ENCODE measurements at regions of chr2 and their contacts with region 1.

Region 1: DNA sequence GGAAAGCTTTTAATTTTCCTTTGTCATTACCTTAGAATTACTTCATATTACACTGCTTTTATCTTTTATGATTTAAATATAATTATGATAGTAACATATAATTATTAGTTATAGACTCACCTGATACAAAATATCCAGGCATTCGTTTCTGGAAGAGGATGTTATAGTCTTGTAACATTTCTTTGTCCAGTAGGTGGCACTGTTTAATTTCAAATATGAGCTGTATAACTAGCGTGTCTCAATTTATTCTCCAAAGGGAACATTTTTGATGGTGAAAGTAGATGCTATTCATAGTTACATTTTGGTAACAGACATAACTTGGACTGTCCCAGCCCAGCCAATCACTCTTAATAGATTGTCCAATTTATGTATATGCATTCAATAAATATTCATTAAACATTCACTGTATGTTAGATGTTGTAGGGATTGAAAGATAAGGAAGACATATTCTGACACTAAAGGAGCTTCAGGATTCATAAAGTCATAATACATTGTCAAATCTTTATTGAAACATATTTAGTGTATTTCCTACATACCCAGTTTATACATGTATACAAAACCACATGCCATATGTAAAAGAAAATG is 19.2 kb downstream of the DAW1 start:
- DNase-seq: no peak
- ATAC-seq: no peak
- H3K4me3 Mint-ChIP-seq: no peak overlapping the region
- H3K27ac Mint-ChIP-seq: no peak overlapping the region
- H3K4me1 Mint-ChIP-seq: no peaks in the 10 kb centered on the region
- H3K27me3 Mint-ChIP-seq: peaks cover 9% of the 10 kb centered on the region

Region 2: DNA sequence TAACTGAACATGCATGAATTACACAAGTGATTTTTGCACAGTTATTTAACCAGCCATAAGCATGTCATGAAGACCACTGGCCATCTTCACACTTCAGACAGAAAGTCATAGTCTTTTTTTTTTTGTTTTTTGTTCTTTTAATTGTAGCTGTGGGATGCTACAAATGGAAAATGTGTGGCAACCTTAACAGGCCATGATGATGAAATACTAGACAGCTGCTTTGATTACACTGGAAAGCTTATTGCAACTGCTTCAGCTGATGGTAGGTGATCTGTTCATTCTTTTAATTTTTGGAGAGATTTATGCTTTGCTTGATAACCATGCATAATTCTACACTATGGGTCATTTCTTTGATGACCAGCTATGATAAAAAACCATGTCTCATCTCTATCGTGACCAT is 16.4 kb after region 1 on chr2:
- CTCF ChIA-PET with region 1: interaction called, 27 read pairs
- POLR2A ChIA-PET with region 1: no interaction called
- intact Hi-C with region 1: no loop called
- DNase-seq: no peak
- ATAC-seq: no peak
- H3K4me3 Mint-ChIP-seq: no peak overlapping the region
- H3K27ac Mint-ChIP-seq: no peak overlapping the region
- H3K4me1 Mint-ChIP-seq: no peaks in the 10 kb centered on the region
- H3K27me3 Mint-ChIP-seq: peaks cover 2% of the 10 kb centered on the region

Region 3: GRCh38 chr2:227971619-227972230 is 81.1 kb after region 1 on chr2:
- CTCF ChIA-PET with region 1: no interaction called
- POLR2A ChIA-PET with region 1: no interaction called
- intact Hi-C with region 1: no loop called
- DNase-seq: no peak
- ATAC-seq: no peak
- H3K4me3 Mint-ChIP-seq: no peak overlapping the region
- H3K27ac Mint-ChIP-seq: no peak overlapping the region
- H3K4me1 Mint-ChIP-seq: no peaks in the 10 kb centered on the region
- H3K27me3 Mint-ChIP-seq: no peaks in the 10 kb centered on the region

Region 4: GRCh38 chr2:228681426-228681825 is 790.8 kb after region 1 on chr2:
- CTCF ChIA-PET with region 1: no interaction called
- POLR2A ChIA-PET with region 1: interaction called, 10 read pairs
- intact Hi-C with region 1: no loop called
- DNase-seq: no peak
- ATAC-seq: no peak
- H3K4me3 Mint-ChIP-seq: no peak overlapping the region
- H3K27ac Mint-ChIP-seq: no peak overlapping the region
- H3K4me1 Mint-ChIP-seq: no peaks in the 10 kb centered on the region
- H3K27me3 Mint-ChIP-seq: no peaks in the 10 kb centered on the region

Region 5: DNA sequence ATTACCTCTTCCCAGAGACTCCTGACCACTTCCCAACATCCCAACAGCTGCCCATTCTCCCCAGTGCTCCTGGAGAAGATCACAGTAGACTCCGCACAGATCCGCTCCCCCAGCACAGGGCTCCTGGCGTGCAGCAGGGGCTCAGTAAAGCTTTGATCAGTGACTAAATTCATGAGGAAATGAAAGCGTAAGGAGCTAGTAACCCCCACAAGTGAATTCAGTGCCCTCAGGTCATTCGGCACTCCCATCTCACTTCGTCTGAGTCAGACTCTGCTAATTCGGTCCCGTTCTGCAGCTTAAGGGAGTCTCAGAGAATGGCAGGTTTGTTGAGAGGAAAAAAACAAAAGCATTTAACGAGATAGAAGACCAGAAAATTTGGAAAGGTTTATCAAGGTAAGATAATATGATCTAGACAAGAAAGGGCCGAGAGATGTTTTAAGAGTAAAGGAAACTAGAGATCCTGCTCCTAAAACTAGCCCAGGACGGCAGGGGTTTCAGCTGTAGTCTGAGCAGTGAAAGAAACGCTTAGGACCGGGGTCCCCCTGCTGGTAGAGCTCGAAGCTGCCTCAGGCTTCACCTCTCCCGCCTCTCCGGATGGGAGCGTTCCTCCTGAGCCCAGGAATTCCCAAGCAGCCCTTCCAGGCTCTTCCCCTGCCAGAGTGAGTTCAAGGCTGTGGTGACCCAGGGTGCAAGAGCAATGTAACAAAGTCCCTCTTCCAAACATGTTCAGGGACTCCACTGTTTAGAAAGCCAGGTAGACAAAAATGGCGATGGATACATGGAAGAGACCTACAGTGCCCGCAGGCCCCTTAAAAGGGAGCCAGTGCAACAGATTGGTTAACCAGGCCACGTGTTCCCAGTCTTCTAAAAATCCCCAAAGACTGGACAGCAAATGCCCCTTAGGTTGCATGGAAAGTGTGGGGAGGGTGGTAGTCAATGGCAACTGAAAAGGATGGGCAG is 1696.4 kb after region 1 on chr2:
- CTCF ChIA-PET with region 1: interaction called, 4 read pairs
- POLR2A ChIA-PET with region 1: no interaction called
- intact Hi-C with region 1: loop called in 1 of 2 experiments (anchors 1 kb)
- DNase-seq: peak; percentile 65
- ATAC-seq: peak; percentile 39
- H3K4me3 Mint-ChIP-seq: no peak overlapping the region
- H3K27ac Mint-ChIP-seq: no peak overlapping the region
- H3K4me1 Mint-ChIP-seq: no peaks in the 10 kb centered on the region
- H3K27me3 Mint-ChIP-seq: peaks cover 18% of the 10 kb centered on the region